Activated T-helper 1 cell treated with anti-CD3 and anti-CD28 coated beads, Interleukin-12 subunit alpha, Interleukin-12 subunit beta, Interleukin-2, Interleukin-4 antibody, amounts not matched to agents 30 ng/mL and 10 ng/mL and 1 ng/mL, durations not matched to agents 14 hours and 24 hours and 36 hours (primary cell): ENCODE measurements at regions of chr7 and their contacts with region 1.

Region 1: DNA sequence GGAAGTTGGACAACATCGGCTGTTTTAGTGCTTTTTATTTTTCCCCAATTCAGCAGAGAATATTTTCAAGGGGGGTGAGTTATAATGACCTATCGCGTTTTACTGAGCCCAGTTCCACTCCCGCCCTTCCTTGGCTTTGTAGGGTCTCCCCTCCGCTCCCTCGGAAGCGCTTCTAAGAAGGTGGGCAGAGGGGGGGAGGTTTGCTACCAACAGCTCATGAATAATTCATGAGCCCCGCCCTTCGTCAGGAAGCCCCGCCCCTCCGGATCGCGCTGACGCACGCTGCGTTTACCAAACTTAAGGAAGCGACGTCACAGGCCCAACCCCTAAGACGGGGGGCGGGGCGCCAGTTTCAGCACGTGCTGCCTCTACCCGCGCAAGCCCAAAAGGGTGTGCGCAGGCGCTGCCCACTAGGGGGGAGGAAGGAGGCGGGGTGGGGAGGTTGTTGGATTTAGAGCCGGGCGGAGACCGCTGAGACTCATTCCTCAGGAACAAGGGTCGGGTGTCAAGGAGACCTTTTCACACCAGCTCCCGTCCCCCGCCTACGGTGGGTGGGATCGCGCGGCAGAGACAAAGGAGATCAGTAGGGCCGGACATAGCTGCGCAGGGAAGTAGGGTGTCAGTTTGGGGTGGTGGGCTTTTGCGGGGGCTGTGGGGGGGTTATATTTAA is 529 bp upstream of the MEPCE start:
- DNase-seq: peak; percentile 100
- H3K4me3 Mint-ChIP-seq: peak overlapping the region; percentile 95
- H3K27ac Mint-ChIP-seq: peak overlapping the region; percentile 99
- H3K4me1 Mint-ChIP-seq: peaks cover 41% of the 10 kb centered on the region
- H3K27me3 Mint-ChIP-seq: peaks cover 10% of the 10 kb centered on the region

Region 2: GRCh38 chr7:99408379-99409191 is 1020.5 kb before region 1 on chr7 and contains the starts of genes BUD31 and PDAP1:
- intact Hi-C with region 1: loop called (anchors 2 kb)
- DNase-seq: peak; percentile 92
- H3K4me3 Mint-ChIP-seq: peak within 1 kb of the TSS; percentile 98
- H3K27ac Mint-ChIP-seq: peak within 1 kb of the TSS; percentile 98
- H3K4me1 Mint-ChIP-seq: peaks cover 43% of the 10 kb centered on the region
- H3K27me3 Mint-ChIP-seq: no peaks in the 10 kb centered on the region
- total RNA-seq, gene BUD31: 132 and 145 TPM in 2 replicates
- total RNA-seq, gene PDAP1: 160 and 162 TPM in 2 replicates

Region 3: DNA sequence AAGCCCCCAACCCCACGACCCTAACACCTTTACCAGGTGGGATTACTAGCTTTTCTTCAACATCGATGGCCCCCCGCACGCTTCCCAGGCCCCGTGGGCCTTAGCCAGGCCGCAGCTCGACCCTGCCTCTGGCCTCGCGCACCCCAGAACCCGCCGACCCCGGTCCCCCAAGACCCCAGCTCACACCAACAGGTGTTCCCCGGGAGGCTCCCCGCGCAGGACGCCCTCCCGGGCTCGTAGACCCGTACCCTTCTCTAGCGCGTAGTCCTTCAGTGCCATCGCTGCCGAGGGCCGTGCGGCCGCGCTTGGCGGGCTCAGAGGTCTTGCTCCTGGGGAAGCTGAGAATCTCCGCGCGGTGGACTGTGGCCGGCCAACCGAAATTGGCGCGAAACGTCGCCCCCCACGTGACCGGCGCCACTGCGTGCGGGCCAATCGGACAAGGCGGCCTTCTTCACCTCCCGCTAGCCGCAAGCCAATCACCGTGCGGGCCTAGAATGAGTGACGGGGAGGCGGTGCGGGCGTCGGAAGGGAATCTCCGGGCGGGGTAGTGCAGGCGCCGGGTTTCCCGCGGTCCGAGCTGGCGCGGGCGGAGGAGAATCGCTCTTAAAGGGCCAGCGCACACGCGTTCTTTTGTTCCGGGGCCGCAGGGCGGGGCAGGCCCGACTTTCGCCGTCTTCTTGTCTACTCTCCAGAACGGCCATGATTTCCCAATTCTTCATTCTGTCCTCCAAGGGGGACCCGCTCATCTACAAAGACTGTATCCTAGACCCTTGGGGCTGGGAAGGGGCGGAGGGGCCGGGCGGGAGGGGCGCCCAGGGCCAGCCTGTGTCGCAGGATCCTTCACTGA is 327.9 kb before region 1 on chr7 and contains the starts of genes AP4M1 and MCM7:
- intact Hi-C with region 1: loop called (anchors 1 kb)
- DNase-seq: peak; percentile 98
- H3K4me3 Mint-ChIP-seq: peak within 1 kb of the TSS; percentile 94
- H3K27ac Mint-ChIP-seq: peak within 1 kb of the TSS; percentile 97
- H3K4me1 Mint-ChIP-seq: peaks cover 39% of the 10 kb centered on the region
- H3K27me3 Mint-ChIP-seq: no peaks in the 10 kb centered on the region
- total RNA-seq, gene AP4M1: 12.3 and 15.9 TPM in 2 replicates
- total RNA-seq, gene MCM7: 447 and 452 TPM in 2 replicates

Region 4: DNA sequence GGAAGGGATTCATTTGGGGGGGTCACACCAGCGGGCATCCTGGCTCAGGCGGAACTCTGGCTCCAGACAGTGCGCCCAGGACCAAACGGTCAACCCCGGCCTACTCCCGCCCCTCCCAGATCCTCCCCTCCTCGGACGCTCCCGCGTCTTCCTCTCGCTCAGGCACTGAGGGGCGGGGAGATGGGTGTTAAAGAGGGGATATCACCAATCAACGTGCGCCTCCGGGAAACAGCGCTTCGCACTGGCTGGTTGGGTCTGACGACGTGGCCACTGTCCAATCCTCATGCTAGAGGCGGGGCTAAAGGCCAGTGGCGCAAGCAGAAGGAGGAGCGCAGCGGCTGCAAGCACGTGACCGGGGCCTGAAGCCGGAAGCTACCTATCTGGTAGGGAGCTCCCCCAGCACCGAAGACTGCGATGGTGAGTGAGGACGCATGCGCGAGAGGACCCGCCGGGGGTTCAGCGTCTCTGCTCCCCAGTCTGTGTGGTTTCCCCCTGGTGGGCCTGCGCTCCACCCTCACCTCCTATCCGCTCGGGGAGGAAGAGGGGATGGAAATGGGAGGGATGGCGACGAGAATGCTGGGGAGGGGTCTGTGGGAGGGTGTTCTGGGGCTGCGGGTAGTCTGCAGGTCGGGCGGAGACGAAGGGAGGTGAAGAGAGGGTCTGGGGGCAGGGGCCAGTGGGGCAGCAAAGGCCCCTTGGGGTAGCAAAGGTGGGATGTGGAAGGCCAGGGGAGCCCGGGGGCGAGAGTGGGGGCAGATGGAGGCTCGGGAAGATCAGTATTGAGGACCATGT is 280.3 kb before region 1 on chr7 and contains the start of gene LAMTOR4:
- intact Hi-C with region 1: loop called (anchors 1 kb)
- DNase-seq: peak; percentile 99
- H3K4me3 Mint-ChIP-seq: peak within 1 kb of the TSS; percentile 97
- H3K27ac Mint-ChIP-seq: peak within 1 kb of the TSS; percentile 94
- H3K4me1 Mint-ChIP-seq: peaks cover 24% of the 10 kb centered on the region
- H3K27me3 Mint-ChIP-seq: no peaks in the 10 kb centered on the region
- total RNA-seq, gene LAMTOR4: 119 and 133 TPM in 2 replicates

Region 5: GRCh38 chr7:100396421-100396982 is 32.6 kb before region 1 on chr7:
- intact Hi-C with region 1: loop called (anchors 1 kb)
- DNase-seq: peak; percentile 53
- H3K4me3 Mint-ChIP-seq: peak overlapping the region; percentile 51
- H3K27ac Mint-ChIP-seq: peak overlapping the region; percentile 84
- H3K4me1 Mint-ChIP-seq: peaks cover 22% of the 10 kb centered on the region
- H3K27me3 Mint-ChIP-seq: peaks cover 51% of the 10 kb centered on the region

Region 6: DNA sequence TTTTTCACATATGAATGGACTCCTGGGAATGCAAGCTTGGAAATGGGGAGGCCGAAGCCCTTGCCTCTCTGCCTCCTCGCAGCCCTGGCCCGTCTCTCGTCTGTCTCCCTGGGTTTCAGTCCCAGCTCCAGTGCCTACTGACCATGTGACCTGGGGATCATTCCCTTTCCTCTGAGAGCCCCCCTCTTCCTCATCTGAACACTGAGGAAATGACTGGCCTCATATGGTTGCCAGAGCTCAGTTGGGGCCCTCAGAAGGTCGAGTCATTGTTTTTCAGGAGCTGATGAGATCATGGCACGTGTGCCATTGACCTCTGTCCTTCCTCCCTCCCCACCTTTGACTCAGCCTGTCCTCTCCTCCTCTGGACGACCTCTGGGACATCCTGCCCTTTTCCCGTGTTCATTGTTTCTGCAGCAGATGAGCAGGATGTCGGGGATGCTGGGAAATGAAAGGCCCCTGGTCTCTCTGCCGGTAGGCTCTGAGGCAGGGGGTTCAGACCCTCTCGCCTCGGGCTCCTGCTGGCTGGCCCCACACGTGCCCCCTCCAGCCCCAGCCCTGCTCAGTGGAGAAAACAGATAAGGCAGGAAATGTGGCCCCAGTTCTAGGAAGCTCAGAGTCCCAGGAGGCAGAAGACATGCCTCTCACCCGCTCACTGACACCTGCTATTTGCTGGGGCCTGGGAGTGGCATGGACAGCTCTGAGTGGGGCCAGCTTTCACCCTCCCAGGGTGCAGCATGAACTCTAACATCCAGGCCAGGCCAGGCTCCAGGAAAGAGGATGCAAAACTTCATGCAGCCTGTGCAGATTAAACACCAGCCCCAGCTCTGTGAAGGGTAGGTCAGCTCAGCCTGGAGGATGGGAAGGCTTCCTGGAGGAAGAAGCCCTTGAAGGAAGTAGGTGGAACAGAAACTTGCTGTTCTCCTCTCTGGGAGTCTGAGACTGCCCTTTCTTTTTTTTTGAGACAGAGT is 15.5 kb after region 1 on chr7:
- intact Hi-C with region 1: no loop called
- DNase-seq: no peak
- H3K4me3 Mint-ChIP-seq: no peak overlapping the region
- H3K27ac Mint-ChIP-seq: peak overlapping the region; percentile 67
- H3K4me1 Mint-ChIP-seq: peaks cover 20% of the 10 kb centered on the region
- H3K27me3 Mint-ChIP-seq: no peaks in the 10 kb centered on the region

Region 7: DNA sequence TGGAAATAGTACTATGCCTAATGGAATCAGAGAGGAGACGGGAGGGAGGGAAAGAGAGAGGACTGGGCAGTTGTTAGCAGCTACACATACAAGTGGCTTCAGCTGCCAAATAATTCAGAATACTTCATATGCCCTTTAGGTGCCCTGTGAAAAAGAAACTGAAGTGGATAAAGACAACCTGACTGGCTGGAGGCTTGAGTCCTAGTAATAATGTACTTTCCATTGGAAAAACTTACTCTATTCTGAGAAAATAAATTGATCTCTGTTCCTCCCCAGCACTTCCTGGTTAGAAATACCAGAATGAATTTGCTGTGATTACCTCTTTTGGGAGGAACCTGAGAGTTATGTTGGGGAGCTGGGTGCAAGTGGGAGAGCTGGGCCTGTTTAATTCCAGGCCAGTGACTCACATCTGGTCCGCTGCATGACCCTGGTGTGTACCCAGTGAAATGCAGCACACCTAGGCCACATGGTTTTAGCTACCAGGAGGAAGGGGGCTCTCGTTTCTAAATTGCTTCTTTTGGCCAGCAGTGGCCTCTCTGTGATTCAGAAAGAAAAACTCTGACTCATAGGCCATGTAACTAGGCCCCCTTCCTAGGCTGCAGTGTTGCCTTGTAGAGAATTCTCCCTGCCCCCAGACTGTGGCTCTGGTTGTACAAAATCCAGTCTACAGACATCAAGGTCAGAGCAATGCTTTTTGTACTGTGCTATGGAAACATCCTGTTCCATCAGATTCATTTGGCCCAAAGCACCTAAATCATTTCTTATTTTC is 116.4 kb after region 1 on chr7:
- intact Hi-C with region 1: loop called (anchors 1 kb)
- DNase-seq: peak; percentile 25
- H3K4me3 Mint-ChIP-seq: peak overlapping the region; percentile 80
- H3K27ac Mint-ChIP-seq: peak overlapping the region; percentile 100
- H3K4me1 Mint-ChIP-seq: peaks cover 98% of the 10 kb centered on the region
- H3K27me3 Mint-ChIP-seq: no peaks in the 10 kb centered on the region

Region 8: DNA sequence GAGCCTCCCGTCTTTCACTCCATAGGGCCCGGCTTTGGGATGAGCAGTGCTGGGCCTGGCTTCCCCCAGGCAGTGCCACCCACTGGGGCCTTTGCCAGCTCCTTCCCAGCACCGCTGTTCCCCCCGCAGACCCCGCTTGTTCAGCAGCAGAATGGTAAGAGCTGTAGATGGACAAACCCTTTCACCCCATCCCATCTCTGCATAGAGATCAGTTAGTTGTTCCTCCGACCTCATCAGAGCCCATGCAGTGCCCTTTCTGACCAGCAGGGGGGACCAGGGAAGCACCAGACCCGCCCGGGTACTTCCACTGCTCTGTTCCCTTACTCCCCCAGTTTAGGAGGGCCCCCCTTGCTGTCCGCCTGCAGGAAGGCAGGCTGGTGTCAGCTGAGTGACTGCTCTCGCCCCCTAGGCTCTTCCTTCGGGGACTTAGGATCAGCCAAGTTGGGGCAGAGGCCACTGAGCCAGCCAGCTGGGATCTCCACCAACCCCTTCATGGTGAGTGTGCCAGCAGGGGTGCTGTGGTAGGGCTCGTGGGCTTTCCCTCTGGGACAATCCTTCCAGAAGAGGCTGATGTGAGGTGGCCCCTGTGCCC is 134.8 kb after region 1 on chr7:
- intact Hi-C with region 1: no loop called
- DNase-seq: peak; percentile 69
- H3K4me3 Mint-ChIP-seq: no peak overlapping the region
- H3K27ac Mint-ChIP-seq: peak overlapping the region; percentile 24
- H3K4me1 Mint-ChIP-seq: peaks cover 33% of the 10 kb centered on the region
- H3K27me3 Mint-ChIP-seq: no peaks in the 10 kb centered on the region

Region 9: GRCh38 chr7:100673300-100673941 is 244.3 kb after region 1 on chr7 and contains the start of gene GNB2:
- intact Hi-C with region 1: loop called (anchors 1 kb)
- DNase-seq: peak; percentile 99
- H3K4me3 Mint-ChIP-seq: peak within 1 kb of the TSS; percentile 98
- H3K27ac Mint-ChIP-seq: peak within 1 kb of the TSS; percentile 94
- H3K4me1 Mint-ChIP-seq: peaks cover 10% of the 10 kb centered on the region
- H3K27me3 Mint-ChIP-seq: peaks cover 10% of the 10 kb centered on the region
- total RNA-seq, gene GNB2: 218 and 221 TPM in 2 replicates

Region 10: GRCh38 chr7:101985903-101986734 is 1557.0 kb after region 1 on chr7:
- intact Hi-C with region 1: no loop called
- DNase-seq: no peak
- H3K4me3 Mint-ChIP-seq: no peak overlapping the region
- H3K27ac Mint-ChIP-seq: no peak overlapping the region
- H3K4me1 Mint-ChIP-seq: peaks cover 4% of the 10 kb centered on the region
- H3K27me3 Mint-ChIP-seq: no peaks in the 10 kb centered on the region